BJ (cell line): ENCODE measurements at regions of chr12 and their contacts with region 1.

Region 1: DNA sequence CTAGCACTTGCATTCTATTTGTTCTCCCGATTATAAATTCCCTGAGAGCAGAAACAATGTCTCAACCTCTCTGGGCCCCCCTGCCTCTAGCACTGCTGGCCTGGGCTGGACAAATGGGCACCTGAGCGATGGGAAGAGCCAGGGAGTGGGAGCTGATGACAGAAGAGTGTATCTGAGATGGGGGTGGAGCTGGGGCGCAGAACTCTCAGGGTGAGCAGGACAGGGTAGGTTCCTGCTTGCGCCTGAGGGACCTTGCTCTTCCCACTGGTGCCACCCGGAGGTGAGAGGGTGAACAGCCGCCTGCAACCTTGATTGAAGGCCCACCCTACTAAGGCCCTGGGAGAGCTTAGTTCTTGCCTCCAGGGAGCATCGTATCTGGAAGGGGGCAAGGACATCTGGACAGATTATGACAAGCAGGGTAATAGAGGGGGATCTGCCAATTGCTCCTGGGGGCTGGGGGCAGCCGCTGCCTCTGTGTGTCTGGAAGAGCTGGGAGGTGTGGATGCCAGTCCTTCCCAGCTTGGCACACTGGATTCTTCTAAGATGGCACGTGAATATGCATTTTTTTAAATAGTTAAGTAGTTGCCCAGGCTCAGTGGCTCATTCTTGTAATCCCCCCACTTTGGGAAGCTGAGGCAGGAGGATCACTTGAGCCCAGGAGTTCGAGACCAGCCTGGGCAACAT is 43.0 kb upstream of the TSPAN9 start:
- DNase-seq: no peak
- H3K4me3 ChIP-seq: no peak overlapping the region
- H3K27me3 ChIP-seq: no peaks in the 10 kb centered on the region
- CTCF ChIP-seq: peak; percentile 86

Region 2: GRCh38 chr12:2794736-2795289 is 239.4 kb before region 1 on chr12 and contains the start of gene FKBP4:
- CTCF ChIA-PET with region 1: no interaction called
- POLR2A ChIA-PET with region 1: no interaction called
- DNase-seq: no peak
- H3K4me3 ChIP-seq: peak within 1 kb of the TSS; percentile 65
- H3K27me3 ChIP-seq: no peaks in the 10 kb centered on the region
- CTCF ChIP-seq: no peak
- polyA plus RNA-seq, gene FKBP4: 27.1 and 32.4 TPM in 2 replicates

Region 3: GRCh38 chr12:2853626-2854025 is 180.6 kb before region 1 on chr12:
- CTCF ChIA-PET with region 1: interaction called, 26 read pairs
- POLR2A ChIA-PET with region 1: no interaction called
- DNase-seq: no peak
- H3K4me3 ChIP-seq: no peak overlapping the region
- H3K27me3 ChIP-seq: no peaks in the 10 kb centered on the region
- CTCF ChIP-seq: peak; percentile 95

Region 4: GRCh38 chr12:2884810-2885209 is 149.4 kb before region 1 on chr12:
- CTCF ChIA-PET with region 1: interaction called, 14 read pairs
- POLR2A ChIA-PET with region 1: no interaction called
- DNase-seq: no peak
- H3K4me3 ChIP-seq: no peak overlapping the region
- H3K27me3 ChIP-seq: no peaks in the 10 kb centered on the region
- CTCF ChIP-seq: no peak

Region 5: GRCh38 chr12:3022225-3022810 is 11.9 kb before region 1 on chr12:
- CTCF ChIA-PET with region 1: interaction called, 11 read pairs
- POLR2A ChIA-PET with region 1: no interaction called
- DNase-seq: no peak
- H3K4me3 ChIP-seq: no peak overlapping the region
- H3K27me3 ChIP-seq: no peaks in the 10 kb centered on the region
- CTCF ChIP-seq: no peak

Region 6: GRCh38 chr12:3150931-3151835 is 117.0 kb after region 1 on chr12:
- CTCF ChIA-PET with region 1: no interaction called
- POLR2A ChIA-PET with region 1: no interaction called
- DNase-seq: no peak
- H3K4me3 ChIP-seq: no peak overlapping the region
- H3K27me3 ChIP-seq: no peaks in the 10 kb centered on the region
- CTCF ChIP-seq: no peak